ENCODE measurements at regions of chr10 and their contacts with region 1.

Region 1: DNA sequence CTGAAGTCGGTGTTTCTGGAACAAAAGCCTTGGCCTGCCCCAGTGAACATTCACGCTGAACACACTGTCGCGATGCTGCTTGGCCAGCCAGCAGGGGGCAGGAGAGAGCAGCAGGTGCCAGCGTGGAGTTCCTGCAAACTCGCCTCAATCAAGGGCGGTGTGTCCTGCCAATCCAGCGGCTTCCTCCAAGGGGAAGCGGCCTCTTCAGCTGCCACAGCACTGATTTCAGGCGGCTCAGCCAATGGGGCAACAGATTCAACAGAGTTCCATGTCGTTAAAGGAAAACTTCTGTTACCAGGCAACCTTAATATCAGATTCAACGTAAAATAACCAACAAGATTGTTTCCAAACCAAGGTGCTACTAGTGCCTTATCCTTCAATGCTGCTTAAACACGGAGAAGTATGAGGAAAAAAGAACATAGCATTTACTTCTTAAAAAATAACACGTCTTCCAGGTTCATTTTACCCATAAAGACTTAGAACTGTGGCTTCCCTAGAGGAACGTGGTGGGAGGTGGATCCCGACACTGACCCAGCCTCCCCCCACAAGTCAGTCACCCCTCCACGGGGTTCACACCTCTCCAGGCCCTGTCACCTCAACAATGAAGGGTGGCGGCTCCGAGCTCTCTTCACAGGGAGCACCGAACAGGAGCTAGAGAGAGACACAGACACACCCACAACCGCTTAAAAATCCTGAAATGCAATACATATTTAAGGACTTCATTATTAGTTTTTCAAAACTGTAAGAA is 178.2 kb downstream of the DIP2C start:
- DNase-seq: peak; percentile 93
- H3K4me3 ChIP-seq: no peak overlapping the region
- H3K27ac ChIP-seq: peak overlapping the region; percentile 28 to 37
- H3K4me1 ChIP-seq: peaks cover 11% of the 10 kb centered on the region
- H3K27me3 ChIP-seq: no peaks in the 10 kb centered on the region
- CTCF ChIP-seq: peak; percentile 97 to 98 (median 97)
- POLR2A ChIP-seq: no peak

Region 2: DNA sequence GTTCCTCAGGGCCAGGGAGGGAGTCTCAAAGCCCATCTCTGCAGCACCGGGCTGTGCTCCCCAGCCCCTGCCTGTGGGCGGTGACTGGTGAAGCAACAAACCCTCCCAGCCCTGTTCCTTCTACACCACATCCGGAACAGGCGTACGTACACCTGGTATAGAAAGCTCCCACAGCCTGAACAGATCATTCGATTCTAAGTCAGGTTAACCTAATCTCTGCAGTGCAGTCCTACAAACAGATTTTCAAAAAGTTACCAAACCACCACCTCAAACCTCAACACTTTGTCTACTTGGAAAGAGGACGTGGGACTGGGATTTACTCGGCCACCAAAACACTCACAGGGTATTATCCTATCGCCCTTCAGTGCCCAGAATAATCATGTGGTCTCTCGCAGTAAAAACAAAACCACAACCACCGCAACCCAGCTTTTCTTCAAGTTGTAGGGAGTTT is 60.2 kb before region 1 on chr10:
- intact Hi-C with region 1: no loop called
- DNase-seq: no peak
- H3K4me3 ChIP-seq: no peak overlapping the region
- H3K27ac ChIP-seq: no peak overlapping the region
- H3K4me1 ChIP-seq: peaks cover 3% of the 10 kb centered on the region
- H3K27me3 ChIP-seq: no peaks in the 10 kb centered on the region
- CTCF ChIP-seq: no peak
- POLR2A ChIP-seq: no peak

Region 3: GRCh38 chr10:689433-690371 is 178.4 kb after region 1 on chr10 and contains the start of gene DIP2C:
- intact Hi-C with region 1: loop called (anchors 5 kb)
- DNase-seq: peak; percentile 69
- H3K4me3 ChIP-seq: peak within 1 kb of the TSS; percentile 68 to 79
- H3K27ac ChIP-seq: peak within 1 kb of the TSS; percentile 85 to 88
- H3K4me1 ChIP-seq: no peaks in the 10 kb centered on the region
- H3K27me3 ChIP-seq: no peaks in the 10 kb centered on the region
- CTCF ChIP-seq: no peak
- POLR2A ChIP-seq: no peak
- total RNA-seq, gene DIP2C: 12.3 to 41.8 TPM

Region 4: GRCh38 chr10:784403-785088 is 273.3 kb after region 1 on chr10:
- intact Hi-C with region 1: loop called (anchors 1 kb)
- DNase-seq: peak; percentile 43
- H3K4me3 ChIP-seq: peak overlapping the region; percentile 27 to 45
- H3K27ac ChIP-seq: peak overlapping the region in 1 of 2 donors; percentile 9
- H3K4me1 ChIP-seq: no peaks in the 10 kb centered on the region
- H3K27me3 ChIP-seq: no peaks in the 10 kb centered on the region
- CTCF ChIP-seq: peak in 1 of 4 experiments; percentile 40
- POLR2A ChIP-seq: no peak

Region 5: GRCh38 chr10:804787-805619 is 293.7 kb after region 1 on chr10:
- intact Hi-C with region 1: loop called (anchors 5 kb)
- DNase-seq: no peak
- H3K4me3 ChIP-seq: no peak overlapping the region
- H3K27ac ChIP-seq: no peak overlapping the region
- H3K4me1 ChIP-seq: no peaks in the 10 kb centered on the region
- H3K27me3 ChIP-seq: no peaks in the 10 kb centered on the region
- CTCF ChIP-seq: no peak
- POLR2A ChIP-seq: no peak